ENCODE measurements at regions of chr9 and their contacts with region 1.

Region 1: GRCh38 chr9:136631038-136632000 is 31.4 kb upstream of the EGFL7 start:
- DNase-seq: peak; percentile 83
- H3K4me3 ChIP-seq: no peak overlapping the region
- H3K27ac ChIP-seq: no peak overlapping the region
- H3K4me1 ChIP-seq: peaks cover 0 to 35% (median 24%) of the 10 kb centered on the region in 4 donors
- H3K27me3 ChIP-seq: peaks cover 12% of the 10 kb centered on the region
- CTCF ChIP-seq: peak; percentile 77 to 97 (median 83)
- EP300 ChIP-seq: no peak
- POLR2A ChIP-seq: no peak

Region 2: DNA sequence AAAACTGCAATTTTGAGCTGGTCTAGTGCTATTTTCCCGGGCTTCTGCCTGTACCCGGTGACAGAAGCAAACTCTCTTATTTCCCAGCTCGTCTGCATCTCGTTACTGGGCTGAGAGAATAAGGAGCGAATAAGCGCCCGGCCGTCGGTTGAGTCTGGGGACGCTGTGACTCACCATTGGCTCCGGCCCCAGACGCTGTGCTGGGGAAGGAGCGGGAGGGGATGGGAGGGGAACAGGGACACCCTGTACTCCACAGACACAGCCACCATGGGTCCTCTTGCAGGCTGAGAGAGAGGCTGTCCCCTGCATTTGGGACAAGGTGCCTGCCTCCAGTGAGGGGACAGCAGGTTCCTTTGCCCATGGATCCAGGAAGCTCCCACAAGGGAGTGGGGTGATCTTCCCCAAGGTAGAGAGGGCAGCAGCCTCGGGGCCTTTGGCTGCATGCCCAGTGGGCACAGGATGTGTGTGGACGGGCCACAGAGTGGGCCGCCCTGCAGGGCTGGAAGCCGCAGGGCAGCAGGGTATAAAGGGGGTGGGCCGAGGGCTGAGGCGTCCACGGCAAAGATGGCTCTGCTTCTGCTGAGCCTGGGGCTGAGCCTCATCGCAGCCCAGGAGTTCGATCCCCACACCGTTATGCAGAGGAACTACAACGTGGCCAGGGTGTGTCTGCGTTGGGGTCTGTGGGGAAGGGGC is 968.4 kb before region 1 on chr9 and contains the start of gene LCN9:
- in situ Hi-C with region 1: no loop called
- intact Hi-C with region 1: loop called (anchors 5 kb)
- DNase-seq: no peak
- H3K4me3 ChIP-seq: no peak within 1 kb of the TSS
- H3K27ac ChIP-seq: no peak within 1 kb of the TSS
- H3K4me1 ChIP-seq: no peaks in the 10 kb centered on the region
- H3K27me3 ChIP-seq: peaks cover 5% of the 10 kb centered on the region
- CTCF ChIP-seq: no peak
- EP300 ChIP-seq: no peak
- POLR2A ChIP-seq: no peak
- total RNA-seq, gene LCN9: not detected

Region 3: DNA sequence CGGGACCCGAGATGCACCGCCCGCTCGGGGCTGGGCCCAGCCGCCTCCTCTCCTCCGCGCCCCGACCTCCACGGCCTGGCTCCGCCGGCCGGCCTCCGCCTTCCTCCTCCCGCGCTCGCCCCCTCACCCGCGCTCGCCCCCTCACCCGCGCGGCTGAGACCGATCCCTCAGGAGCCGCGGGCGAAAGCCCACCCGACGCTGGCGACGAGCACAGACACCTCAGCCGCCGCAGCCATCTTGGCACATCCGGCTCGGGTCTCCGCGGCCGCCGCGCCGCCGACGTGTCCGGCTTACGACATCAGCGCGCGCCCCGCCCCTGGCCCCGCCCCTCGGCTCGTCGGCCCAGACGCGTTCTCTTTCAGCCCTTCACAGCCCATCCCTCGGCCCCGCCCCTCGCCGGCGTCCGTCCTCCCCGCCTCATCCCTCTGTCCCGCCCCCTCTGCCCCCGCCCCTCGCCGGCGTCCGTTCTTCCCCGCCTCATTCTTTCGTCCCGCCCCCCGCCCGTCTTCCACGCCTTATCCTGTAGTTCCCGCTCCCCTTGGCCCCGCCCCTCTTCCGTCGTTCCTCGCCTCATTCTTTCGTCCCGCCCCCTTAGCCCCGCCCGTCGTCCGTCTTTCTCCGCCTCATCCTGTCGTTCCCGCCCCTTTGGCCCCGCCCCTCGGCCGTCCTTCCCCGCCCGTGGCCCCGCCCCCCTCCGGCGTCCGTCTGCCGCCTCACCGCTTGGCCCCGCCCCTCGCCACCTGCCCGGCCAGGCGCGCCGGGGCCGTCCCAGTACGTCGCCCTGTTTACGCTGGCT is 148.3 kb before region 1 on chr9 and contains the start of gene SEC16A:
- in situ Hi-C with region 1: loop called in 1 of 4 experiments (anchors 10 kb)
- intact Hi-C with region 1: no loop called
- DNase-seq: peak; percentile 100
- H3K4me3 ChIP-seq: peak within 1 kb of the TSS; percentile 80 to 100 (median 88)
- H3K27ac ChIP-seq: peak within 1 kb of the TSS; percentile 98 to 100 (median 100)
- H3K4me1 ChIP-seq: peaks cover 20 to 28% (median 21%) of the 10 kb centered on the region in 4 donors
- H3K27me3 ChIP-seq: no peaks in the 10 kb centered on the region
- CTCF ChIP-seq: no peak
- EP300 ChIP-seq: peak; percentile 14
- POLR2A ChIP-seq: peak; percentile 94
- total RNA-seq, gene SEC16A: 54.1 to 75.9 (median 65.8) TPM

Region 4: GRCh38 chr9:136493567-136493971 is 137.8 kb before region 1 on chr9:
- in situ Hi-C with region 1: loop called in 3 of 4 experiments (anchors 5 to 10 kb)
- intact Hi-C with region 1: no loop called
- DNase-seq: no peak
- H3K4me3 ChIP-seq: no peak overlapping the region
- H3K27ac ChIP-seq: no peak overlapping the region
- H3K4me1 ChIP-seq: peaks cover 0 to under 1% (median under 1%) of the 10 kb centered on the region in 4 donors
- H3K27me3 ChIP-seq: no peaks in the 10 kb centered on the region
- CTCF ChIP-seq: no peak
- EP300 ChIP-seq: no peak
- POLR2A ChIP-seq: no peak

Region 5: GRCh38 chr9:136545966-136546698 is 85.2 kb before region 1 on chr9 and contains the start of gene NOTCH1:
- in situ Hi-C with region 1: no loop called
- intact Hi-C with region 1: no loop called
- DNase-seq: peak; percentile 94
- H3K4me3 ChIP-seq: peak within 1 kb of the TSS; percentile 88 to 97 (median 90)
- H3K27ac ChIP-seq: peak within 1 kb of the TSS; percentile 93 to 99 (median 98)
- H3K4me1 ChIP-seq: peaks cover 53 to 76% (median 66%) of the 10 kb centered on the region in 4 donors
- H3K27me3 ChIP-seq: no peaks in the 10 kb centered on the region
- CTCF ChIP-seq: peak in 1 of 5 experiments; percentile 7
- EP300 ChIP-seq: no peak
- POLR2A ChIP-seq: peak; percentile 84
- total RNA-seq, gene NOTCH1: 48.2 to 154 (median 98.2) TPM

Measured in transverse colon (tissue), 4 donors.